Activated naive CD8-positive, alpha-beta T cell treated with anti-CD3 and anti-CD28 coated beads, Interleukin-2, amount 10 ng/mL, durations not matched to agents 7 days and 5 days (primary cell): ENCODE measurements at regions of chr16 and their contacts with region 1.

Region 1: DNA sequence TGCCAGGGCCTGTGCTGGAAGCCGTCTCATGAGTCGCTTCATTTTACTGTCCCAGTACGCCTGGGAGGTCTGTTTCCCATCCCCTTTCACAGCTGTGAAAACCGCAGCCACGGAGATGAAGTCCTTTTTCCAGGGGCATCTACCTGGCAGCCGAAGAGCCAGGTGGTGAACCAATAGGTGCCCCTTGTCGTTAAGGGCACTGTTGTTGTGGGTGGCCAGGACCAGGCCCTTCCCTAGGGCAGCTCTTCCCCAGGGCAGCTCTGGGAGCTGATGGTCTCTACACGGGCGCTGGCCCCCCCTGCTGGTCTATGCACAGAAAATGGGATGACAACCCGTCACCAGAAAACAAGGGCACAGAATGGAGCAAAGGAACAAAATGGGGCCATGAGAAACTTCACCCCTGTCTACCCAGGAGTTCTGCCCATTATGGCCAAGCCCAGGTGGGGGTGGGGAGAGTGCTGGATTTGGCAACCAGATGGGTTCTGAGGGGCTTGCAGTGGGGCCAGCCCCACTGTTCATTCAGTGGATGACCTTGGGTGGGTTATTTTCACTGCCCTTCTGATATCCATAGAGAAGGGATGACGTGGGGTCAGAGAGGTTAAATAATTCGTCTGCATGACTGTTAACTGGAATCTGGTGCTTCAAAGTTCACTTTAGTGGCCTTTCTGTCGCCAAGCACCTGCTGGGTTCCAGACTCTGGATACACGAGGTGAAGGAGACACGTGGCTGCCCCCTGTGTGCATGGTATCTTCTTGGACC is 11.5 kb downstream of the RMI2 start:
- DNase-seq: peak; percentile 71
- ATAC-seq: no peak
- H3K4me3 Mint-ChIP-seq: peak overlapping the region; percentile 48
- H3K27ac Mint-ChIP-seq: peak overlapping the region; percentile 43
- H3K4me1 Mint-ChIP-seq: peaks cover 79% of the 10 kb centered on the region
- H3K27me3 Mint-ChIP-seq: no peaks in the 10 kb centered on the region

Region 2: GRCh38 chr16:11312718-11313492 is 43.8 kb before region 1 on chr16:
- POLR2A ChIA-PET with region 1: interaction called, 17 read pairs
- DNase-seq: no peak
- ATAC-seq: peak; percentile 30
- H3K4me3 Mint-ChIP-seq: peak overlapping the region; percentile 58
- H3K27ac Mint-ChIP-seq: peak overlapping the region; percentile 75
- H3K4me1 Mint-ChIP-seq: peaks cover 68% of the 10 kb centered on the region
- H3K27me3 Mint-ChIP-seq: no peaks in the 10 kb centered on the region

Region 3: GRCh38 chr16:11328172-11329070 is 28.3 kb before region 1 on chr16:
- POLR2A ChIA-PET with region 1: interaction called, 13 read pairs
- DNase-seq: no peak
- ATAC-seq: peak; percentile 85
- H3K4me3 Mint-ChIP-seq: peak overlapping the region; percentile 83
- H3K27ac Mint-ChIP-seq: peak overlapping the region; percentile 89
- H3K4me1 Mint-ChIP-seq: peaks cover 65% of the 10 kb centered on the region
- H3K27me3 Mint-ChIP-seq: no peaks in the 10 kb centered on the region

Region 4: GRCh38 chr16:11345040-11345862 is 11.5 kb before region 1 on chr16 and contains the start of gene RMI2:
- POLR2A ChIA-PET with region 1: interaction called, 11 read pairs
- DNase-seq: peak; percentile 95
- ATAC-seq: peak; percentile 99
- H3K4me3 Mint-ChIP-seq: peak within 1 kb of the TSS; percentile 99
- H3K27ac Mint-ChIP-seq: peak within 1 kb of the TSS; percentile 91
- H3K4me1 Mint-ChIP-seq: peaks cover 54% of the 10 kb centered on the region
- H3K27me3 Mint-ChIP-seq: no peaks in the 10 kb centered on the region
- total RNA-seq, gene RMI2: 89.8 to 93.0 TPM